GM12878 (cell line): ENCODE measurements at regions of chr12 and their contacts with region 1.

Region 1: GRCh38 chr12:25320123-25321006 is 69.6 kb upstream of the KRAS start:
- DNase-seq: peak; percentile 82
- ATAC-seq: peak; percentile 84
- H3K4me3 ChIP-seq: no peak overlapping the region; the same call in 1 of the 2 replicates
- H3K27ac ChIP-seq: peak overlapping the region; percentile 54
- H3K4me1 ChIP-seq: peaks cover 40% of the 10 kb centered on the region
- H3K27me3 ChIP-seq: no peaks in the 10 kb centered on the region
- CTCF ChIP-seq: no peak
- EP300 ChIP-seq: peak; percentile 28 to 85
- POLR2A ChIP-seq: no peak
- RAD21 ChIP-seq: no peak

Region 2: DNA sequence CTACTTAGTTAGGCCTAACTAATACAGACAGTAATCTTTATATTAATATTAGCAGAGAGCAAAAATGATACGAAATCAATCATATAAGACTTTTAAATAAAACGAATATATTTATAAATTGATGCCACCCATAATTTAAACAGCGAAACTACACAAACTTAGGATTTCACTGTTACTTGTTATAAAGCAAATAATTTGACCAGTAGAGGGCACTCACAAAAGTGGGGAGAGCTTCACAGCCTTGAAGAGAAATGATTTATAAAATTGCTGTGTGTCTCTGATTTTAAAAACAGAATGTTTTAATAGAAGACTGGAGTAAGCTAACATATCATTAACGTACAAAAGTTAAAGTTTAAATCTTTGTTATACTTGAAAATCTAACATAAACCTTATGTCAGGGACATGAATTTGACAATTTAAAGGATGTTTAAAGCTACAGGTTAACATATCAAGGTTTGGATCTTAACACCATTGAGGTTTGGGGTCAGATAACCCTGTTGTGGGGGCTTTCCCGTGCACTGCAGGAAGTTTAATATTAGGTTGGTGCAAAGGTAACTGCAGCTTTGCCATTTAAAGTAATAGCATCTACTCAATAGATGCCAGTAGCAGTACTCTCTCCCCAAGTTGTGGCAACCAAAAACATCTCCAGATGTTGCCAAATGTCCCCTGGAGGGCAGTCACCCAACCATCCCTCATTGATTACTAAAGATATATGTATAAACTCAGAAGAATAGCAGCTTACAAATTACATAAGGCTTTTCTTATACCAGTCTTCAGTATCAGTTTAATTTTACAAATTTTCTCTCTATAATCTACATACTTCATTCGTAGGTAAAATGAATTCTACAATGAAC is 79.0 kb before region 1 on chr12:
- CTCF ChIA-PET with region 1: interaction called, 18 read pairs
- POLR2A ChIA-PET with region 1: interaction called, 4 read pairs
- RAD21 ChIA-PET with region 1: interaction called, 10 read pairs
- SMC1A ChIA-PET with region 1: interaction called, 13 read pairs
- in situ Hi-C with region 1: no loop called
- intact Hi-C with region 1: no loop called
- DNase-seq: no peak
- ATAC-seq: peak; percentile 81
- H3K4me3 ChIP-seq: no peak overlapping the region
- H3K27ac ChIP-seq: no peak overlapping the region
- H3K4me1 ChIP-seq: no peaks in the 10 kb centered on the region
- H3K27me3 ChIP-seq: no peaks in the 10 kb centered on the region
- CTCF ChIP-seq: peak; percentile 55 to 63 (median 56); a peak in 5 of 6 replicates
- EP300 ChIP-seq: no peak
- POLR2A ChIP-seq: no peak
- RAD21 ChIP-seq: peak; percentile 69

Region 3: GRCh38 chr12:25295361-25295760 is 25.0 kb before region 1 on chr12:
- CTCF ChIA-PET with region 1: interaction called, 13 read pairs
- POLR2A ChIA-PET with region 1: interaction called, 4 read pairs
- RAD21 ChIA-PET with region 1: interaction called, 37 read pairs
- SMC1A ChIA-PET with region 1: interaction called, 42 read pairs
- in situ Hi-C with region 1: no loop called
- intact Hi-C with region 1: loop called (anchors 2 kb)
- DNase-seq: no peak
- ATAC-seq: no peak
- H3K4me3 ChIP-seq: no peak overlapping the region
- H3K27ac ChIP-seq: no peak overlapping the region
- H3K4me1 ChIP-seq: peaks cover 5% of the 10 kb centered on the region; the same call in 1 of the 2 replicates
- H3K27me3 ChIP-seq: no peaks in the 10 kb centered on the region
- CTCF ChIP-seq: no peak
- EP300 ChIP-seq: no peak
- POLR2A ChIP-seq: no peak
- RAD21 ChIP-seq: no peak

Region 4: DNA sequence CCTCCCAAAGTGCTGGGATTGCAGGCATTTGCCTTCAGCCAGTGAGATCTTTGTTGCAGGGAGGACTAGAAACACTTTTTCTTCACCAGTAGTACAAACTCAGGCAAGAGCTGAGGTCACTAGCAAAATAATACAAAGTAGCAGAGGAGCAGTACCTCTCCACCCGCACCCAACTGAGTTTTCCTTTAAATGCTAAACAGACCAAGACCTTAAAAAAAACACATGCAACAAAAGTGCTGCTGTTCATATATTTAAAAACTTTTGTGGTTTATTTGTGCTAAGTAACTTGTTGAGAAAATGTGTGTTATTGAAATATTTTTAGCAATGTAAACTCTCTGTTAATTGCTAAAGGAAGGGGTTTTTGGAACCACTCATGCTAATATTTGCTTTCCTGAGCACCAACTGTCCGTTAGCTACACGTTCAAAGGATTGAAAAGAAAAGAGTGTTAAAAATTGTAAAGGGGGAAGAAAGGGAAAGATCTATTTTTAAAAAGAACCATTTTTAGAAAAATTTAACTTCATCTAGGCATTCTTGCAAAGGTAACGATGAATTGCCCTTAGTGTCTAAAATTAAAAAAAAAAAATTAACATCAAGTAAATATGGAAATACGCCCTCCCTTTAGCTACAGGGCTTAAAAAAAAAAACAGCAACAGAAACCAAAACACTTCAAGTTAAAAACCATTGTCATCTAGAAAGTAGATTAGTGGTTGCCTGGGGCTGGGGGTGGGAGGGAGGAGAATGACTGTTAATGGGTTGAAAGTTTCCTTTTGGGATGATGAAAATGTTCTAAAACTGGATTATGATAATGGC is 44.4 kb after region 1 on chr12:
- CTCF ChIA-PET with region 1: interaction called, 6 read pairs
- POLR2A ChIA-PET with region 1: interaction called, 7 read pairs
- RAD21 ChIA-PET with region 1: interaction called, 23 read pairs
- SMC1A ChIA-PET with region 1: interaction called, 35 read pairs
- in situ Hi-C with region 1: no loop called
- intact Hi-C with region 1: loop called (anchors 1 kb)
- DNase-seq: no peak
- ATAC-seq: peak; percentile 91
- H3K4me3 ChIP-seq: peak overlapping the region; percentile 61
- H3K27ac ChIP-seq: peak overlapping the region; percentile 28
- H3K4me1 ChIP-seq: peaks cover 8% of the 10 kb centered on the region
- H3K27me3 ChIP-seq: no peaks in the 10 kb centered on the region; a peak in 1 of 4 replicates
- CTCF ChIP-seq: no peak
- EP300 ChIP-seq: peak in 1 of 2 experiments; percentile 34; a peak in 2 of 4 replicates
- POLR2A ChIP-seq: no peak
- RAD21 ChIP-seq: no peak

Region 5: GRCh38 chr12:25529738-25530137 is 209.4 kb after region 1 on chr12:
- CTCF ChIA-PET with region 1: no interaction called
- POLR2A ChIA-PET with region 1: no interaction called
- RAD21 ChIA-PET with region 1: no interaction called
- SMC1A ChIA-PET with region 1: no interaction called
- in situ Hi-C with region 1: no loop called
- intact Hi-C with region 1: no loop called
- DNase-seq: no peak
- ATAC-seq: no peak
- H3K4me3 ChIP-seq: no peak overlapping the region
- H3K27ac ChIP-seq: no peak overlapping the region
- H3K4me1 ChIP-seq: no peaks in the 10 kb centered on the region
- H3K27me3 ChIP-seq: no peaks in the 10 kb centered on the region; a peak in 1 of 4 replicates
- CTCF ChIP-seq: no peak
- EP300 ChIP-seq: no peak
- POLR2A ChIP-seq: no peak
- RAD21 ChIP-seq: no peak